ENCODE measurements at regions of chr1 and their contacts with region 1.

Region 1: DNA sequence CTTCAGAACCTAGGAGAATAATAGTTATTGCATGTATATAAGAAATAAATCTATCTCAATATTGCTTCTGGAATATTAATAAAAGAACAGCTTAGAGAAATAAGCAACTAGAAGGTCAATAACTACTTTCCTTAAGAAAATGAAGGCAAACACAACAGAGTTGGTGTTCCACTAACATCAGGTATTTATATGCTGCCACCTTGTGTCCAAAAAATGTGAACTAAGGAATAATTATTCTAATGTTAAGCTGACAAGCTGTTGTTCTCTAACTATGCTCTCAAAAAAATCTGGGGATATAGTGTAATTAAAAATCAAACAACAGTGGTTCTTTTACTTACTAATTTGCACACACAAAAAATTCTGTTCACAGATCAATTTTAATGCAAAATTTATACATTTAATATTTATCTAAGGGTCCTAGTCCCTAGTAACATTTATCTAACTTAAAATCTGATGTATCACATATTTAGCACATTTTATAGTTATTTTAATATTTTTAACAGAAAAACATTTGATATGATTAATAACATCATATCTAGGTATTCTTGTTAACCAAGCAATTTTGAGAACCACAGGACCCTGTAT is 39.6 kb downstream of the UCHL5 start:
- DNase-seq: no peak
- H3K4me3 ChIP-seq: no peak overlapping the region
- H3K27ac ChIP-seq: no peak overlapping the region
- H3K4me1 ChIP-seq: no peaks in the 10 kb centered on the region
- H3K27me3 ChIP-seq: no peaks in the 10 kb centered on the region
- CTCF ChIP-seq: peak; percentile 14 to 43 (median 40)
- EP300 ChIP-seq: no peak
- POLR2A ChIP-seq: no peak

Region 2: DNA sequence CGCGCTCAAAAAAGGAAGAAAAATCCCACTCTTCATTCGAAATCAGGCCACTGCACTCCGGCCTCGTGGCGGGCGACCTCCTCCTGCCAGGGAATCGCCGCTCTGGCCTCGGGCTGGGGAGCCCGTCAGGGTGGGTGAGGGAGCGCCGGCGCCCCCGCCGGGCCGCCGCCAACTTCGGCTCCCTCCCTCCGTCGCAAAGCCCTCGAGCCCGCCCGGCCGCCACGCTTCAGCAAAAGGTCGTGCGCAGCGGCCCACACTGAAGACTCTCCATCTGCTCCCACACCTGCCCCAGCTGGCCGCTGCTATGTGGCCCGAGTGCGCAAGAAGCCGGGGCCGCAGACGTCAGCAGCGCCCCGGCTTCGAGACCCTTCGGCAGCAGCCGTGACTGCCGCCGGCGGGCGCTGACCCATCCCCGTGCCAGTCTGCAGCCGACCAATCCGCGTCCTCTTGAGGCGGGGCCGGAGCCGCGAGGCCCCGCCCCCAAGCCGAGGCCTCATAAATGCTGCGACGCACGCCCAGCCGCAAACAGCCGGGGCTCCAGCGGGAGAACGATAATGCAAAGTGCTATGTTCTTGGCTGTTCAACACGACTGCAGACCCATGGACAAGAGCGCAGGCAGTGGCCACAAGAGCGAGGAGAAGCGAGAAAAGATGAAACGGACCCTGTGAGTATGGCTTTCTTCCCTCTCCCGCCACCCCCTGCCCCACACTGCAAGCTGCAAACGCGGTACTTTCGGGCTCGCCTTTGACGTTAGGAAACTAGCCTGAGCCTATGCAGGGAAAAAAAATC is 210.8 kb before region 1 on chr1 and contains the start of gene RGS2:
- intact Hi-C with region 1: loop called in 1 of 4 experiments (anchors 10 kb)
- DNase-seq: peak; percentile 92 to 96 (median 94)
- H3K4me3 ChIP-seq: peak within 1 kb of the TSS; percentile 55
- H3K27ac ChIP-seq: peak within 1 kb of the TSS; percentile 66 to 85
- H3K4me1 ChIP-seq: no peaks in the 10 kb centered on the region
- H3K27me3 ChIP-seq: no peaks in the 10 kb centered on the region
- CTCF ChIP-seq: no peak
- EP300 ChIP-seq: no peak
- POLR2A ChIP-seq: peak; percentile 99
- total RNA-seq, gene RGS2: 31.0 to 247 (median 53.6) TPM